ENCODE measurements at regions of chr6 and their contacts with region 1.

Region 1: GRCh38 chr6:26520853-26521599 is 17.1 kb upstream of the HMGN4 start:
- DNase-seq: peak; percentile 87 to 89 (median 88)
- H3K4me3 ChIP-seq: peak overlapping the region; percentile 64 to 69
- H3K4me3 Mint-ChIP-seq: peak overlapping the region; percentile 80 to 97 (median 92)
- H3K27ac ChIP-seq: peak overlapping the region; percentile 64
- H3K27ac Mint-ChIP-seq: peak overlapping the region; percentile 82 to 99 (median 96)
- H3K4me1 ChIP-seq: peaks cover 8% of the 10 kb centered on the region
- H3K4me1 Mint-ChIP-seq: peaks cover 27 to 44% (median 30%) of the 10 kb centered on the region in 4 donors
- H3K27me3 ChIP-seq: no peaks in the 10 kb centered on the region
- H3K27me3 Mint-ChIP-seq: peaks cover 1 to 2% of the 10 kb centered on the region in 2 donors

Region 2: DNA sequence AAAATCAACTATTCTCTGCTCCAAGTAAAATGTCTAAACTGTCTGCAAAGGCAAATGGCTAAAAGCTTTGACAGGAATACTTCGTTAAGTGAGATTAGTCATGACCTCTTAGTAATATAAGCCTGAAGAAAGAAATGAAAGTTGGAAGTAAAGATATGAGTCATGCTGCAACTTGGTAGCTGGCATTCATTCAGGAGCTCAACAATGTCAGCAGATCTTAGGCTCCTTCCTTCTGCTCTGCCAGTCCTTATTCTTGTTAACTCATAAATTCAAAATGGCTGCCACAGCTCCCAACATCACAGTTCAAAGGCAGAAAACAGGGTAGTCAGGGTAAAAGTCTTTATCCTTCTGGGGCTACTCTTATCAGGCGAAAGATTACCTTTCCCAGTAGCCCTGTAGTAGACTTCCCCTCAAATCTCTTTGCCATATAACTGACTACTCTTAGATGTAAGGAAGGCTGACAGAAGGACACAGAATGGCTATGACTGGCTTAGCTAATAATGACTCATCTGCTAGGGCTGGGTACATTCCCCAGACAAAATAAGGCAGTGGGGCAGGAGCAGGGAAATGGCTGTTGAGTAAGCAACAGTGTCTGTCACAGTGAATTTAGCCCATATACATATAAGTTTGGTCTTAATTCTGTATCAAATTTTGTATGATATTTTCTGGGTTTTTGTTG is 1777.6 kb before region 1 on chr6:
- CTCF ChIA-PET with region 1: no interaction called
- POLR2A ChIA-PET with region 1: no interaction called
- intact Hi-C with region 1: no loop called
- DNase-seq: no peak
- H3K4me3 ChIP-seq: no peak overlapping the region
- H3K4me3 Mint-ChIP-seq: no peak overlapping the region
- H3K27ac ChIP-seq: no peak overlapping the region
- H3K27ac Mint-ChIP-seq: no peak overlapping the region
- H3K4me1 ChIP-seq: no peaks in the 10 kb centered on the region
- H3K4me1 Mint-ChIP-seq: peaks cover 0 to 5% (median 0%) of the 10 kb centered on the region in 4 donors
- H3K27me3 ChIP-seq: no peaks in the 10 kb centered on the region
- H3K27me3 Mint-ChIP-seq: peaks cover 2 to 3% of the 10 kb centered on the region in 2 donors

Region 3: GRCh38 chr6:26401987-26402658 is 118.9 kb before region 1 on chr6 and contains the start of gene BTN3A1:
- CTCF ChIA-PET with region 1: no interaction called
- POLR2A ChIA-PET with region 1: no interaction called
- intact Hi-C with region 1: loop called (anchors 5 kb)
- DNase-seq: peak; percentile 80 to 84 (median 81)
- H3K4me3 ChIP-seq: peak within 1 kb of the TSS; percentile 91 to 94
- H3K4me3 Mint-ChIP-seq: peak within 1 kb of the TSS; percentile 97 to 100 (median 99)
- H3K27ac ChIP-seq: peak within 1 kb of the TSS; percentile 89
- H3K27ac Mint-ChIP-seq: peak within 1 kb of the TSS; percentile 95 to 100 (median 99)
- H3K4me1 ChIP-seq: peaks cover 51% of the 10 kb centered on the region
- H3K4me1 Mint-ChIP-seq: peaks cover 41 to 58% (median 47%) of the 10 kb centered on the region in 4 donors
- H3K27me3 ChIP-seq: no peaks in the 10 kb centered on the region
- H3K27me3 Mint-ChIP-seq: no peaks in the 10 kb centered on the region
- total RNA-seq, gene BTN3A1: 255 to 262 TPM

Region 4: GRCh38 chr6:26439657-26440056 is 81.4 kb before region 1 on chr6:
- CTCF ChIA-PET with region 1: no interaction called
- POLR2A ChIA-PET with region 1: interaction called, 3 read pairs
- intact Hi-C with region 1: loop called (anchors 2 kb)
- DNase-seq: peak in 1 of 5 donors; percentile 31
- H3K4me3 ChIP-seq: peak overlapping the region in 1 of 2 donors; percentile 95
- H3K4me3 Mint-ChIP-seq: peak overlapping the region; percentile 93 to 100 (median 98)
- H3K27ac ChIP-seq: peak overlapping the region; percentile 97
- H3K27ac Mint-ChIP-seq: peak overlapping the region; percentile 97 to 100 (median 99)
- H3K4me1 ChIP-seq: peaks cover 37% of the 10 kb centered on the region
- H3K4me1 Mint-ChIP-seq: peaks cover 23 to 55% (median 45%) of the 10 kb centered on the region in 4 donors
- H3K27me3 ChIP-seq: no peaks in the 10 kb centered on the region
- H3K27me3 Mint-ChIP-seq: no peaks in the 10 kb centered on the region

Region 5: DNA sequence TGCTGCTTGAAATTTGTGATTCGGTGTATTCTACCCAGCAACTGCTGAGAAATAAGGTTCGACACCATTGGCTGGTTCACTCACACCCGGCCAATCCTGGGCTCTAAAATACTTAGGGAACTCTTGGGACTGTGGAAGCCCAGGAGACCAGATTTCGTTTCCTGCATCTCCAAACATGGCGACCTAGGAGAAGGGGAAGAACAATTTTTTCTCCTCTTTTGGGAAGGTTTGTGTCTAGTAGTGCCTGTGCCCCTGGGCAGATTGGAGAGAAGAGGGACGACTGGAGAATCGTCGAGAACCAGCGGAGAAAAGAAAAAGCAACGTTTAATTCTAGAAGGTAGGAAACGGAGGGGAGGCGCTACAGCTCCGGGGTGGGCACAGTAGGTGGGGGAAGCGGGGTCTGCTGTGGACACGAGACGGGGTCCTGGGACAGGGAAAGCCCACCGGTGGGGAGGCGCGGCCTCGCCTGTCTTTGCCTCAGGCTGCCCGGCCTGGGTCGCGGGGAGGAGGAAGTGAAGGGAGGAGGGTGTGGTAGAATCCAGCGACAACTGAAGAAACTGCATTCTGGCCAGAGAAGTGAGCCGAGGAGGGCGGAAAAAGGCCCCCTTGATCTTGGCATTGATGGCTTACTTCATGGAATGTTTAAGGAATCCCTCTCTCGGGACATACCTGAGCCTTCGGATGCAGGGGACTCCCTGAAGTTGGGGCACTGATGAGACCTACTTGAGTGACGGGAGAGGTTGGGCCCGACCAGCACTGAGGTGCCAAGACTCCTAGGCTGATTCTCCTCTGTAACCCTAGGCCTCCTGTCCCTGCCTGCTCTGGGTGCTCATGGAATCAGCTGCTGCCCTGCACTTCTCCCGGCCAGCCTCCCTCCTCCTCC is 63.0 kb before region 1 on chr6 and contains the start of gene BTN2A1:
- CTCF ChIA-PET with region 1: interaction called, 3 read pairs
- POLR2A ChIA-PET with region 1: no interaction called
- intact Hi-C with region 1: loop called (anchors 2 kb)
- DNase-seq: peak; percentile 76 to 86 (median 78)
- H3K4me3 ChIP-seq: peak within 1 kb of the TSS; percentile 90 to 95
- H3K4me3 Mint-ChIP-seq: peak within 1 kb of the TSS; percentile 96 to 100 (median 98)
- H3K27ac ChIP-seq: peak within 1 kb of the TSS; percentile 85
- H3K27ac Mint-ChIP-seq: peak within 1 kb of the TSS; percentile 91 to 99 (median 98)
- H3K4me1 ChIP-seq: peaks cover 47% of the 10 kb centered on the region
- H3K4me1 Mint-ChIP-seq: peaks cover 45 to 73% (median 57%) of the 10 kb centered on the region in 4 donors
- H3K27me3 ChIP-seq: no peaks in the 10 kb centered on the region
- H3K27me3 Mint-ChIP-seq: no peaks in the 10 kb centered on the region
- total RNA-seq, gene BTN2A1: 57.0 to 62.8 TPM

Region 6: GRCh38 chr6:26532699-26533531 is 11.9 kb after region 1 on chr6:
- CTCF ChIA-PET with region 1: interaction called, 8 read pairs
- POLR2A ChIA-PET with region 1: interaction called, 77 read pairs
- intact Hi-C with region 1: loop called (anchors 1 kb)
- DNase-seq: peak; percentile 90 to 94 (median 91)
- H3K4me3 ChIP-seq: peak overlapping the region; percentile 86 to 93
- H3K4me3 Mint-ChIP-seq: peak overlapping the region; percentile 94 to 99 (median 96)
- H3K27ac ChIP-seq: peak overlapping the region; percentile 74
- H3K27ac Mint-ChIP-seq: peak overlapping the region; percentile 91 to 99 (median 96)
- H3K4me1 ChIP-seq: peaks cover 41% of the 10 kb centered on the region
- H3K4me1 Mint-ChIP-seq: peaks cover 33 to 51% (median 40%) of the 10 kb centered on the region in 4 donors
- H3K27me3 ChIP-seq: no peaks in the 10 kb centered on the region
- H3K27me3 Mint-ChIP-seq: peaks cover 6 to 9% of the 10 kb centered on the region in 2 donors

Region 7: GRCh38 chr6:26553635-26554446 is 32.8 kb after region 1 on chr6:
- CTCF ChIA-PET with region 1: no interaction called
- POLR2A ChIA-PET with region 1: interaction called, 6 read pairs
- intact Hi-C with region 1: loop called (anchors 1 kb)
- DNase-seq: peak; percentile 83 to 88 (median 86)
- H3K4me3 ChIP-seq: peak overlapping the region; percentile 67 to 93
- H3K4me3 Mint-ChIP-seq: no peak overlapping the region
- H3K27ac ChIP-seq: peak overlapping the region; percentile 31
- H3K27ac Mint-ChIP-seq: no peak overlapping the region
- H3K4me1 ChIP-seq: peaks cover 31% of the 10 kb centered on the region
- H3K4me1 Mint-ChIP-seq: peaks cover 11 to 28% (median 19%) of the 10 kb centered on the region in 4 donors
- H3K27me3 ChIP-seq: no peaks in the 10 kb centered on the region
- H3K27me3 Mint-ChIP-seq: peaks cover 0 to 2% of the 10 kb centered on the region in 2 donors

Region 8: GRCh38 chr6:26596579-26597388 is 75.8 kb after region 1 on chr6 and contains the start of gene ABT1:
- CTCF ChIA-PET with region 1: no interaction called
- POLR2A ChIA-PET with region 1: no interaction called
- intact Hi-C with region 1: loop called (anchors 1 kb)
- DNase-seq: peak; percentile 95 to 98 (median 96)
- H3K4me3 ChIP-seq: peak within 1 kb of the TSS; percentile 76 to 98
- H3K4me3 Mint-ChIP-seq: no peak within 1 kb of the TSS
- H3K27ac ChIP-seq: peak within 1 kb of the TSS; percentile 91
- H3K27ac Mint-ChIP-seq: peak within 1 kb of the TSS in 3 of 7 donors; percentile 80 to 92 (median 88)
- H3K4me1 ChIP-seq: peaks cover 24% of the 10 kb centered on the region
- H3K4me1 Mint-ChIP-seq: peaks cover 0 to 16% (median 8%) of the 10 kb centered on the region in 4 donors
- H3K27me3 ChIP-seq: no peaks in the 10 kb centered on the region
- H3K27me3 Mint-ChIP-seq: peaks cover 15 to 22% of the 10 kb centered on the region in 2 donors
- total RNA-seq, gene ABT1: 33.5 to 34.8 TPM

Region 9: GRCh38 chr6:27019651-27020552 is 498.9 kb after region 1 on chr6:
- CTCF ChIA-PET with region 1: no interaction called
- POLR2A ChIA-PET with region 1: no interaction called
- intact Hi-C with region 1: no loop called
- DNase-seq: peak in 4 of 5 donors; percentile 6 to 39 (median 20)
- H3K4me3 ChIP-seq: peak overlapping the region; percentile 21 to 60
- H3K4me3 Mint-ChIP-seq: peak overlapping the region; percentile 72 to 88 (median 82)
- H3K27ac ChIP-seq: no peak overlapping the region
- H3K27ac Mint-ChIP-seq: peak overlapping the region in 4 of 7 donors; percentile 19 to 74 (median 54)
- H3K4me1 ChIP-seq: peaks cover 12% of the 10 kb centered on the region
- H3K4me1 Mint-ChIP-seq: peaks cover 6 to 18% (median 11%) of the 10 kb centered on the region in 4 donors
- H3K27me3 ChIP-seq: peaks cover under 1% of the 10 kb centered on the region
- H3K27me3 Mint-ChIP-seq: peaks cover 3 to 5% of the 10 kb centered on the region in 2 donors

Measured in CD4-positive, alpha-beta memory T cell (primary cell).